ENCODE measurements at regions of chr2 and their contacts with region 1.

Region 1: DNA sequence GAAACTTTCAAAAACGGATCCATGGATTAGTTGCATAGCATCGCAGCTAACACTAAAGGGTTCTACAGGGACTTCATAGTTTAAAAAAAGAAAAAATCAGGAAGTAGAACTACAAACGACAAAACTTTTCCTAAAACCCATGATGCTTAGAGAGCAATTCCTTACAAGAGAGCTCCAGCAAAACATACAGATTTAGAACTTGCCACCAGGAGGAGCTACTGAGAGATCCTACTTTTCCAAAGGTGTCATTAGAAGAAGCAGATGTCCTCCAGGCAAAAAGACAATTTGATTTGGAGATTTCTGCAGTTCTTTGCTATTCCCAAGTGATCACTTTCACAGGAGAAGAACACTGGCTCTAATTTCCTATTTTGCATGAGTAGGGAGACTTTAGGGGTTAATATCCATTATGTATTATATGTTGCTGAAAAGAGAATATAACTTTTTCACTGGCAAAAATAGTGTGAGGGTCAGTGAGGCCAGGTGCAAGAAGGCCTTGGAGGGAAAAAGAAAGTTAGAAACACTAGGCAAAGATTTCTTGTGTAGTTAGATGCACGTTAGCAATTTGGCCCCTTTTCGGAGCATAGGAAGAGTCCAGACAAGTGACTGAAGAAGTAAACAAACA is 436.2 kb downstream of the SUCLG1 start:
- DNase-seq: peak in 1 of 2 donors; percentile 75
- H3K4me3 ChIP-seq: no peak overlapping the region
- H3K27ac ChIP-seq: no peak overlapping the region
- H3K4me1 ChIP-seq: no peaks in the 10 kb centered on the region
- H3K27me3 ChIP-seq: no peaks in the 10 kb centered on the region
- CTCF ChIP-seq: peak in 4 of 7 experiments; percentile 18 to 42 (median 40)
- EP300 ChIP-seq: no peak
- POLR2A ChIP-seq: no peak

Region 2: GRCh38 chr2:84314901-84315330 is 292.0 kb after region 1 on chr2:
- intact Hi-C with region 1: loop called (anchors 10 kb)
- DNase-seq: peak; percentile 91 to 93
- H3K4me3 ChIP-seq: no peak overlapping the region
- H3K27ac ChIP-seq: no peak overlapping the region
- H3K4me1 ChIP-seq: peaks cover 0 to 7% (median 1%) of the 10 kb centered on the region in 4 donors
- H3K27me3 ChIP-seq: peaks cover 0 to 23% (median 4%) of the 10 kb centered on the region in 3 donors
- CTCF ChIP-seq: peak in 5 of 7 experiments; percentile 68 to 83 (median 79)
- EP300 ChIP-seq: no peak
- POLR2A ChIP-seq: no peak